AG04449 (cell line): ENCODE measurements at regions of chr6 and their contacts with region 1.

Region 1: DNA sequence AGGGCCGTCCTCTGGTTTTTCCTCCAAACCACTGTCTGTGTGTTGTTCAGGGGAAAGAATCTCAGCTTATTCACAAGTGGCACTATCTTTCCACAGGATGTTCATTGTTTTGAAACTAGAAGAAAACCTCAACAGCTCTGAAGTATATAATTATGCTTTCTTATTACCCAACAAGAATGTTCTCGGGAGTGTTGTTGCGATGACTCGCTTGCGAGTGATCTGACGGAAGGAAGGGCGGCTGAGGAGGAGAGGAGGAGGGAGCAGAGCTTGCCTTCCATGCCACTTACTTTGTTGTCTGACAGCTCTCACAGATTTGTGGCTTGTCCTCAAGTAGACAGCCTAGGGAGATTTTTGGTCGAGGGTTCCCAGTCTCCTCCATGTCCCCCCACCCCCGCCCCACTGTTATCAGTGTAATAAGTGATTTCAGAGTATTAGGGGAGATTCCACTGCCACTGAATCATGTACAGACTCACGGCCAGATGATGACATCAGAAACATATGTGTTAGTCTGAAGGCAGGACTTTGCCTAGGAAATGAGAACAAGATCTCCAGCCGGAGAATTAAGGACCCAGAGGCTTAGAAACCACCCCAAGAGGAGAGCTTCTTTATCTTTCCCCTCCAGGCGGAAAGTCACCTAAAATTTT is 80.7 kb upstream of the CCN6 start:
- DNase-seq: peak; percentile 92
- H3K4me3 ChIP-seq: peak overlapping the region; percentile 36
- CTCF ChIP-seq: no peak

Region 2: GRCh38 chr6:111899531-111899930 is 73.7 kb before region 1 on chr6:
- CTCF ChIA-PET with region 1: no interaction called
- POLR2A ChIA-PET with region 1: no interaction called
- DNase-seq: no peak
- H3K4me3 ChIP-seq: no peak overlapping the region
- CTCF ChIP-seq: no peak

Region 3: DNA sequence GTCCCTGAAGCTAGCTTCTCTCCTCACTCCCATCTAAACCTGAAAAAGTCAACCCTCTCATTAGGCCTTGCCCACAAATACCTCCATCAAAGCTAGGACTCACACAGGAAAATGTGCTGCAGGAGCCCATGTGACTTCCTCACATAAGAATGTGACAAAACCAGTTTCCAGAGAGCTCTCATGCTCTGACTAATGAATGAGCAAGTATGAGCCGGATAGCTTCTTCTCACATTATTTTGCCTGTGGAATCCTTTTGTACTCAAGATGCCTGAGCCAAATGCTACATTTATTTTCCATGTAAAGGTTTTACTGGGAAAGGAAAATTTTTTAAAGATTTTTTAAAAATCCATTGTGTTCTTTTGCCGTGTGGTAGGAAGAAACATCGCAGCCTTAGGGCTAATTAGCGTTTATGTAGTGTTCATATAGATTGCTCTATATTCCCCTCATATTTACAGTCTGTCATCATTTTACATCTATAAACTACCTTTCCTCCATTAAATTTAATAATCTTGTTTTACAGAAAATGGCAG is 12.0 kb after region 1 on chr6:
- CTCF ChIA-PET with region 1: interaction called, 9 read pairs
- POLR2A ChIA-PET with region 1: interaction called, 12 read pairs
- DNase-seq: peak; percentile 89
- H3K4me3 ChIP-seq: no peak overlapping the region
- CTCF ChIP-seq: no peak